GM13977 (cell line): ENCODE measurements at regions of chr20 and their contacts with region 1.

Region 1: GRCh38 chr20:61841966-61842365 is 223.7 kb downstream of the TAF4 start:
- DNase-seq: no peak
- CTCF ChIP-seq: no peak

Region 2: GRCh38 chr20:61099806-61100205 is 742.2 kb before region 1 on chr20:
- in situ Hi-C with region 1: no loop called
- DNase-seq: no peak
- CTCF ChIP-seq: no peak

Region 3: GRCh38 chr20:61731561-61732181 is 110.3 kb before region 1 on chr20:
- in situ Hi-C with region 1: loop called (anchors 25 kb)
- DNase-seq: no peak
- CTCF ChIP-seq: no peak

Region 4: GRCh38 chr20:62485062-62485700 is 643.2 kb after region 1 on chr20:
- in situ Hi-C with region 1: no loop called
- DNase-seq: no peak
- CTCF ChIP-seq: no peak